ENCODE measurements at regions of chr19 and their contacts with region 1.

Region 1: GRCh38 chr19:49403404-49404187 is 15.5 kb downstream of the KASH5 start:
- DNase-seq: peak; percentile 69

Region 2: DNA sequence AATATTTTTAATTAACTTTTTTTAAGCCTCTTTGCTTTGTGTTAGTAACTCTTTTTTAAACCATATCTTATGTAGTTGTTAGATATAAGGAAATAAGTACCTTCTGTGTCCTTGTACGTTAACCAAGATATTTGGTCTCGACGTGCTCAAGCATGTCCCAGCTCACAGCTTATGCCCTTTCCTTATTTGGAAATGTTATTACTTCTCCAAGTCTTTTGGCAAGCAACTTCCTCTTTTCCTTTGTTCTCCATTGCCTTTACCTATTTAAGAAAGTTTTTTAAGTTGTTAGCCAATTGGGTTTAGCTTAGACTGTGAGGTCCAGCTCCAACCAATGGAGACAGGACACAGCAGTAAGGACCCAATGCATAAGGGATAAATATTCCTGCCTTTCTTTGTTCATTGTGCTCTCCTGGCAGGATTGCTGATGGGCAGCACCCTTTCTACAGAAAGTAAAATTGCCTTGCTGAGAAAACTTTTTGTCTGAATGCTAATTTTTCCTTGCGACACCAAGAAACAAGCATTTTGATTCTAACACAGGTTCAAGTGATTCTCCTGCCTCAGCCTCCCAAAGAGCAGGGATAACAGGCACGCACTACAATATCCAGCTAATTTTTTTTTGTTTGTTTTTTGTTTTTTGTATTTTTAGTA is 34.8 kb before region 1 on chr19:
- CTCF ChIA-PET with region 1: no interaction called
- POLR2A ChIA-PET with region 1: no interaction called
- DNase-seq: no peak

Region 3: GRCh38 chr19:49425922-49426592 is 22.5 kb after region 1 on chr19:
- CTCF ChIA-PET with region 1: interaction called, 5 read pairs
- POLR2A ChIA-PET with region 1: interaction called, 13 read pairs
- DNase-seq: peak; percentile 66